ENCODE measurements at regions of chr1 and their contacts with region 1.

Region 1: DNA sequence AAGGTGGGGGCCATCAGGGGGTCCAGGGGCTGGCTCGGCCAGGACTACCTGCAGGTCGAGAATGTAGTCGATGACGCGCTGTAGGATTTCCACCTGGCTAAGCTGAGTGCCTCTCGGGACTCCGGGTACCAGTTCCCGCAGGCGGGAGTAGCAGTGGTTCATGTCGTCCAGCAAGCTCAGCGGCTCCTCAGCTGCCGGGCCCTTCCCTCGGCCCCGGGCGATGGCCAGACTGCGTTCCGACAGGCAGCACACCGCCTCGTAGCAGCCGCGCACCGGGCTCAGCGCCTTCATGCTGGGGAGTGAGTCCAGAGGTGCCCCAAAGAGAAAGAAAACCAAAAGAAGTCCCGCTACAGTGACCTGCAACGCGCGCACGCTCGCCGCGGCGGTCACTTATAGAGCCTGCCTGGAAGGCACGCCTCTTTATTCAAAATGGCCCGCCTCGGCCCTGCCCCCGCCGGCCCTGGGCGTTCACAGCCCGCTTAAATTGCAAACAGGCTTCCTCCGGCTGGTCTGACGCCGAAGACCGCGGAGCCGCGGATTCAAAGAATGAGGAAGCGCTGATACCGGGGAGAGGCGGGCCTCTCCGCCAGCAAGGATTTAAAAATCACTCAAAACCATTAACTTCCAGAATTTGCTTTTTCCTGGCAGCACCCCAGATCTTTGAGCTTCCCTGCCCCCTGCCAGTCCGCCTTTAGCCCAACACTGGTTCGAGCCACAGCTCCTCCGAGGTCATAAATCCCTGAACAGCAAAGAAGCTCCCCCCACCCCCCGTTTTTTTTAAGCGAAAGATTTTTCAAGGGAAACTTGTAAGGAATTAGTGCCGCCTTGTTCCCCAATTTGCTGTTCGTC is at the start of gene ID3:
- DNase-seq: peak; percentile 85 to 93 (median 89)
- H3K4me3 ChIP-seq: peak within 1 kb of the TSS; percentile 82 to 85
- H3K4me3 Mint-ChIP-seq: peak within 1 kb of the TSS; percentile 87 to 97 (median 96)
- H3K27ac ChIP-seq: peak within 1 kb of the TSS; percentile 66
- H3K27ac Mint-ChIP-seq: peak within 1 kb of the TSS; percentile 84 to 97 (median 94)
- H3K4me1 ChIP-seq: peaks cover 52% of the 10 kb centered on the region
- H3K4me1 Mint-ChIP-seq: peaks cover 30 to 84% (median 56%) of the 10 kb centered on the region in 4 donors
- H3K27me3 ChIP-seq: no peaks in the 10 kb centered on the region
- H3K27me3 Mint-ChIP-seq: no peaks in the 10 kb centered on the region
- total RNA-seq, gene ID3: 89.6 to 98.0 TPM

Region 2: DNA sequence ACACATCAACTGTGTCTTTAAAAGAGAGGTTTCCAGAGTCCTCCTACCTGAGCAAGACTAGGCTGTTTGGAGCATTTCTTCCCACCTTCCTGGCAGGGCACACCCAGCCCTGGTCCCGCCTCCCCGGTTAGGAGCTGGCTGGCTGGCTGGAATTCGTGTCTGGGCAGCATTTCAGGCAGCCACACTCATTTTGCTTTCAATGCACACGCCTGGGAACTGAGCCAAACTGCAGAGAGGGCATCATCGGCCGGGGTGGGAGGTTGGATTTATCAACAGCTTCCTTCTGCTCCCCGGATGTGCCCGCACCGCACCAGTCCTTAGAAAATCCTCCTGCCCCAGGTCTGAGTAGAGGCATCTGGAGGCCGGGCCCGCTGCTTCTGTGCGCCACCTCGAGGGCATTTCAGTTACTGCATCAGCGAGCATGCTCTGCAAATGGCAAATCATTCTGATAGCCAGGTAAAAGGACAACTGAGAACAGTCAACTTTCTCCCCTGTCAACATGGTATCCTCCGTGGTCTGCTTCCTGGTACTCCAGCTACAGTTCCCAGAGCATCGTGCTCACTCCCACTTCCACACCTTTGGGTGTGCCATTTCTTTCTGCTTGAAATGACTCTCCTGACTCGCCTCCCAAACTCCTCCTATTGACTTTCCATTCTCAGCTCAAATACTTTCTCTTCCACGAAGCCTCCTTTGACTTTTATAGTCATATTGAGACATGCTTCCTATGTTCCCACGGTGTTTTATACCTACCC is 155.4 kb before region 1 on chr1:
- CTCF ChIA-PET with region 1: no interaction called
- POLR2A ChIA-PET with region 1: no interaction called
- intact Hi-C with region 1: no loop called
- DNase-seq: peak; percentile 69 to 76 (median 74)
- H3K4me3 ChIP-seq: no peak overlapping the region
- H3K4me3 Mint-ChIP-seq: no peak overlapping the region
- H3K27ac ChIP-seq: no peak overlapping the region
- H3K27ac Mint-ChIP-seq: peak overlapping the region in 2 of 7 donors; percentile 14 to 22
- H3K4me1 ChIP-seq: peaks cover 11% of the 10 kb centered on the region
- H3K4me1 Mint-ChIP-seq: peaks cover 5 to 12% (median 9%) of the 10 kb centered on the region in 4 donors
- H3K27me3 ChIP-seq: no peaks in the 10 kb centered on the region
- H3K27me3 Mint-ChIP-seq: no peaks in the 10 kb centered on the region

Region 3: GRCh38 chr1:23484253-23485001 is 74.9 kb before region 1 on chr1:
- CTCF ChIA-PET with region 1: no interaction called
- POLR2A ChIA-PET with region 1: interaction called, 15 read pairs
- intact Hi-C with region 1: no loop called
- DNase-seq: peak; percentile 88 to 95 (median 92)
- H3K4me3 ChIP-seq: peak overlapping the region in 1 of 2 donors; percentile 64
- H3K4me3 Mint-ChIP-seq: peak overlapping the region; percentile 87 to 94 (median 89)
- H3K27ac ChIP-seq: peak overlapping the region; percentile 6
- H3K27ac Mint-ChIP-seq: peak overlapping the region in 6 of 7 donors; percentile 79 to 95 (median 88)
- H3K4me1 ChIP-seq: peaks cover 15% of the 10 kb centered on the region
- H3K4me1 Mint-ChIP-seq: peaks cover 11 to 20% (median 16%) of the 10 kb centered on the region in 4 donors
- H3K27me3 ChIP-seq: no peaks in the 10 kb centered on the region
- H3K27me3 Mint-ChIP-seq: peaks cover 3 to 6% of the 10 kb centered on the region in 2 donors

Region 4: GRCh38 chr1:23524716-23525401 is 34.5 kb before region 1 on chr1:
- CTCF ChIA-PET with region 1: interaction called, 11 read pairs
- POLR2A ChIA-PET with region 1: interaction called, 32 read pairs
- intact Hi-C with region 1: loop called (anchors 2 kb)
- DNase-seq: peak; percentile 26 to 59 (median 36)
- H3K4me3 ChIP-seq: peak overlapping the region; percentile 5 to 44
- H3K4me3 Mint-ChIP-seq: peak overlapping the region; percentile 59 to 93 (median 74)
- H3K27ac ChIP-seq: peak overlapping the region; percentile 60
- H3K27ac Mint-ChIP-seq: peak overlapping the region; percentile 82 to 97 (median 93)
- H3K4me1 ChIP-seq: peaks cover 69% of the 10 kb centered on the region
- H3K4me1 Mint-ChIP-seq: peaks cover 52 to 83% (median 75%) of the 10 kb centered on the region in 4 donors
- H3K27me3 ChIP-seq: no peaks in the 10 kb centered on the region
- H3K27me3 Mint-ChIP-seq: no peaks in the 10 kb centered on the region

Region 5: GRCh38 chr1:23539698-23540266 is 19.6 kb before region 1 on chr1:
- CTCF ChIA-PET with region 1: interaction called, 39 read pairs
- POLR2A ChIA-PET with region 1: interaction called, 33 read pairs
- intact Hi-C with region 1: no loop called
- DNase-seq: peak; percentile 91 to 95 (median 92)
- H3K4me3 ChIP-seq: no peak overlapping the region
- H3K4me3 Mint-ChIP-seq: peak overlapping the region in 7 of 8 donors; percentile 23 to 73 (median 52)
- H3K27ac ChIP-seq: no peak overlapping the region
- H3K27ac Mint-ChIP-seq: peak overlapping the region; percentile 68 to 92 (median 89)
- H3K4me1 ChIP-seq: peaks cover 22% of the 10 kb centered on the region
- H3K4me1 Mint-ChIP-seq: peaks cover 12 to 32% (median 23%) of the 10 kb centered on the region in 4 donors
- H3K27me3 ChIP-seq: no peaks in the 10 kb centered on the region
- H3K27me3 Mint-ChIP-seq: no peaks in the 10 kb centered on the region

Region 6: DNA sequence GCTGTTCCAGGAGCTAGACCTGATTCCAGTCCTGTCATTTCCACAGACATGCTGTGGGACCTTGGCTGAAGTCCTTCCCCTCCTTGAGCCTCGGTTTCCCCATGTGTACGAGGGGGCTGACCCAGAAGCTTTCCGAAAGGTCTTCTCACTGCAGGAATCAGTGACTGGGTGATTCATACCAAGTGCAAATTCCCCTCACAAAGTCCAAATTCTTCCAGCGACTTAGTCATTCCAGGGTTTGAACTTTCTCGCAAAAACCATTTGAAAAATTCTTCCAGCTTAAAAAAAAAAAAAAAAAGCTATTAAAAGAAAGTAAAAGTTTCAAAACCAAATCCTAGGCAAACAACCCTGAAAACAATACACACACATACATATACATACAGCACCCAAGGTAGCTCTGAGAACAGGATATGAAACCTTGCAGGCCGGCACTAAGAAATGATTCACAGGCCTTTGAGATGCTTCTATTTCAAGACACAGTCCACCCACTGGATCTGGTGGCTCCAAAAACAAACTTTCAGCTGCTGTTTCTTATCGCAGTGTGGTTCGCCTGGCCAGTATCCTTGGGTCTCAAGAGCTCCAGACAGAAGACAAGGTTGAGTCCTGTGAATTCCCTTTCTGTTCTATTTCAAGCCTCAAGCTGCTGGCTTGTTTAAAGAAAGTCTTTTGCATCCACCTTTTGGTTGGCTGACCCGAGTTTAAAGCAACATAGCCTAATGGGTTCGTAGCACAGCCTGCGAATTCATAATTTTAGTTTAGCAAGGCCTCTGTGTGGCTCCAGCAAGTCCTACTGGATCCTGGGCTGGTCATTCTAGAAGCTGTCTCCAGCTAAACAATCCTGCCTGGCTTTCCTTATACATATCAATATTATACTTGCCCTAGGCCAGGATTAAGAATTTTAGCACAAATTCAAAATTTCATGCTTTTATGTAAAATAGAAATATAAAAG is 18.0 kb after region 1 on chr1:
- CTCF ChIA-PET with region 1: interaction called, 8 read pairs
- POLR2A ChIA-PET with region 1: interaction called, 111 read pairs
- intact Hi-C with region 1: loop called (anchors 1 kb)
- DNase-seq: no peak
- H3K4me3 ChIP-seq: no peak overlapping the region
- H3K4me3 Mint-ChIP-seq: peak overlapping the region in 3 of 8 donors; percentile 36 to 46 (median 38)
- H3K27ac ChIP-seq: no peak overlapping the region
- H3K27ac Mint-ChIP-seq: peak overlapping the region; percentile 4 to 86 (median 54)
- H3K4me1 ChIP-seq: peaks cover 25% of the 10 kb centered on the region
- H3K4me1 Mint-ChIP-seq: peaks cover 13 to 27% (median 20%) of the 10 kb centered on the region in 4 donors
- H3K27me3 ChIP-seq: no peaks in the 10 kb centered on the region
- H3K27me3 Mint-ChIP-seq: no peaks in the 10 kb centered on the region

Region 7: DNA sequence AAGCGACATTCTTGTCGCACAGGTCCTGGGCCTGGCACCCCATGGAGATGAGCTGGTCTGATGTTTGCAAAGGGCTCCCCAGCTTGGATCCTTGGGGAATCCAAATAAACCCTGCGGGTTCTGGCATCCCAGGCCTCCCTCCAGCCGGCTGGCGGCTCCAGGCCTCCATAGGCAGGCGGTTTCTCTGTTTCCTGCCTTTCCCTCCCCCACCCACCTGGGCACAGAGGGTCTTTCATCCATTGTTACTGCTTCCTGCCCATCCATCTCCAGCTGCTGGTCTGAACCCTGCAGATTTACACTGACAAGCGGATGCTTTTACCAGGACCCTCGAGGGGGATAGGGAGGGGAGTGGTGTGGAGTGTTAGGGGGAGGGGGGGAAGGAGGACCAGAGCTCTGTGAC is 39.1 kb after region 1 on chr1:
- CTCF ChIA-PET with region 1: interaction called, 23 read pairs
- POLR2A ChIA-PET with region 1: interaction called, 263 read pairs
- intact Hi-C with region 1: loop called (anchors 2 kb)
- DNase-seq: no peak
- H3K4me3 ChIP-seq: no peak overlapping the region
- H3K4me3 Mint-ChIP-seq: no peak overlapping the region
- H3K27ac ChIP-seq: no peak overlapping the region
- H3K27ac Mint-ChIP-seq: peak overlapping the region in 3 of 7 donors; percentile 25 to 88 (median 40)
- H3K4me1 ChIP-seq: peaks cover 90% of the 10 kb centered on the region
- H3K4me1 Mint-ChIP-seq: peaks cover 48 to 95% (median 80%) of the 10 kb centered on the region in 4 donors
- H3K27me3 ChIP-seq: no peaks in the 10 kb centered on the region
- H3K27me3 Mint-ChIP-seq: no peaks in the 10 kb centered on the region

Region 8: GRCh38 chr1:23619299-23620188 is 60.2 kb after region 1 on chr1:
- CTCF ChIA-PET with region 1: interaction called, 77 read pairs
- POLR2A ChIA-PET with region 1: interaction called, 616 read pairs
- intact Hi-C with region 1: loop called (anchors 1 kb)
- DNase-seq: peak; percentile 87 to 94 (median 90)
- H3K4me3 ChIP-seq: peak overlapping the region; percentile 47 to 58
- H3K4me3 Mint-ChIP-seq: peak overlapping the region; percentile 81 to 88 (median 84)
- H3K27ac ChIP-seq: peak overlapping the region; percentile 65
- H3K27ac Mint-ChIP-seq: peak overlapping the region; percentile 92 to 98 (median 95)
- H3K4me1 ChIP-seq: peaks cover 88% of the 10 kb centered on the region
- H3K4me1 Mint-ChIP-seq: peaks cover 62 to 95% (median 77%) of the 10 kb centered on the region in 4 donors
- H3K27me3 ChIP-seq: no peaks in the 10 kb centered on the region
- H3K27me3 Mint-ChIP-seq: no peaks in the 10 kb centered on the region

Region 9: DNA sequence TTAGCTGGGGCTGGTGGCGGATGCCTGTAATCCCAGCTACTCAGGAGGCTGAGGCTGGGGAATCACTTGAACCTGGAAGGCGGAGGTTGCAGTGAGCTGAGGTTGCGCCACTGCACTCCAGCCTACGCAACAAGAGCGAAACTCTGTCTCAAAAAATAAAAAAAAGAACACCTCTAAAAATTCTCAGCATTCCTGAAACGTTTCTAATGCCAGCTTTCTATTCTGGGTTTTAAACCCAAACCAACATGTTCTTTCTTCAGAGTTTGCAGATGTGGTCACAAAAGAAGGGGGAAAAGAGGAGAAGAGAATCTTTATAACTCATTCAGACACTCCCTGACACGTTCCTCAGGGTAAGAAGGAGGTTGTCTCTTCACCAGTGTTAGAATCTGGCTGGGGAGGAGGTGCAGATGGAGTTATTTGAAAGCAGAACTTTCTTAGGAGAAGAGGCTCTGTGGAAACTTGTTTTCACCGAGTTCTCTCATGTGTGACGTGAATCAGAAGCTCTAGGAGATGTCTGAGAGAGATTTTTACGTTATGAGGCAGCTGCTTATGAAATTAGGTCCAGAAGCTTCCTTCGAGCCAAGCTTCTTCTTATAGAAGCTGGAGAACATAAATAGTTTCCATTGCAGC is 371.6 kb after region 1 on chr1:
- CTCF ChIA-PET with region 1: no interaction called
- POLR2A ChIA-PET with region 1: no interaction called
- intact Hi-C with region 1: no loop called
- DNase-seq: no peak
- H3K4me3 ChIP-seq: no peak overlapping the region
- H3K4me3 Mint-ChIP-seq: no peak overlapping the region
- H3K27ac ChIP-seq: no peak overlapping the region
- H3K27ac Mint-ChIP-seq: no peak overlapping the region
- H3K4me1 ChIP-seq: no peaks in the 10 kb centered on the region
- H3K4me1 Mint-ChIP-seq: no peaks in the 10 kb centered on the region
- H3K27me3 ChIP-seq: no peaks in the 10 kb centered on the region
- H3K27me3 Mint-ChIP-seq: peaks cover 6 to 9% of the 10 kb centered on the region in 2 donors

Measured in CD4-positive, alpha-beta memory T cell (primary cell).